Pancreas (tissue), 10 donors: ENCODE measurements at regions of chr9 and their contacts with region 1.

Region 1: DNA sequence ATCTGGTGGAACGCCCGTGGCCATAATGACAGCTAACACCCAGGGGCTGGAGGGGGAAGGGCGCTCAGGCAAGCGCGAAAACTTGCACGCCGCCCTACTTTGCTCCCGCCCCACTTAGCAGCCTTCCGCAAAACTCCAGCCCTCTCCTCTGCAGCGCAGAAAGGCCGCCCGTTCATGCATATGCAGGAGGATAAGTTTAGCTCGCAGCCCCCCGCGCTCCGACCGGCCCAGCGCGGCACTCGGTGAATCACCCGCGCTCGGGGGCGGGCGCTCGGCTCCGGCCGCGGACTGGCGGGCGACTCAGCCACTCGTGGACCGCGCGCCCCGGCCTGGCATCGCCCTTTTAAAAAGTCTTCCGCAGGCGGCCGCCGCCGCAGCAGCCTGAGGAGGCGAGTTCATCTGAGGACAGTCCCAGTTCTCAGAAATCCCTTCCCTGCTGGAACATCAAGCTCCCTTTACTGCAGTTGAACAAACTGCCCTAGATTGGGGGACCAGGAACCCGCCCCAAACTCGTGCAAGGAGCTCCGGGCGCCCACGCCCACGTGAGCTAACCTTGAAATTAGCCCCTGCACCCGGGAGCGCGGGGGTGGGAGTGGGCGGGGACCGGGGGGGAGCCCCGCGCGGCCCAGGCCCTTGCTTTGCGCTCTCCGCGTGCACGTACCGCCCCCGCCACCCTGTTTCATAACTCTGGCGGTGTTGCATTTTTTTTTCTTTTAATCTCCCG is 4.5 kb upstream of the KLF9 start:
- DNase-seq: peak; percentile 93 to 97 (median 96)
- ATAC-seq: peak; percentile 49 to 64 (median 56)
- H3K4me3 ChIP-seq: peak overlapping the region; percentile 7 to 50 (median 36)
- H3K27ac ChIP-seq: peak overlapping the region; percentile 97 to 100 (median 100)
- H3K4me1 ChIP-seq: peaks cover 17 to 32% (median 27%) of the 10 kb centered on the region in 3 donors
- H3K27me3 ChIP-seq: no peaks in the 10 kb centered on the region
- CTCF ChIP-seq: no peak

Region 2: DNA sequence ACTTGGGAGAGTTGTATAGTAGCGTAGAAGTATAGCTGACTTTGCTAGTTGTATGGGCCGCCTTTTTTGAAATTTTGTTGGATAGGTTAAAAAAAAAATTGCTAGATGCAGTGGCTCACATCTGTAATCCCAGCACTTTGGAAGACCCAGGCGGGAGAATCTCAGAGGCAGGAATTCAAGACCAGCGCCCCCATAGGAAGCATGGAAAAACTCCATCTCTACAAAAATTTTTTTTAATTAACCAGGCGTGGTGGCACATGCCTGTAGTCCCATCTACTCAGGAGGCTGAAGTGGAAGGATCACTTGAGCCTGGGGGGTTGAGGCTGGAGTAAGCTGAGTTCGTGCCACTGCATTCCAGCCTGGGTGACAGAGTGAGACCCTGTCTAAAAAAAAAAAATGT is 101.0 kb before region 1 on chr9:
- intact Hi-C with region 1: no loop called
- DNase-seq: no peak
- ATAC-seq: no peak
- H3K4me3 ChIP-seq: no peak overlapping the region
- H3K27ac ChIP-seq: no peak overlapping the region
- H3K4me1 ChIP-seq: no peaks in the 10 kb centered on the region
- H3K27me3 ChIP-seq: no peaks in the 10 kb centered on the region
- CTCF ChIP-seq: no peak

Region 3: GRCh38 chr9:70466976-70467561 is 48.1 kb after region 1 on chr9:
- intact Hi-C with region 1: loop called in 1 of 3 experiments (anchors 5 kb)
- DNase-seq: no peak
- ATAC-seq: peak in 1 of 4 donors; percentile 31
- H3K4me3 ChIP-seq: no peak overlapping the region
- H3K27ac ChIP-seq: no peak overlapping the region
- H3K4me1 ChIP-seq: peaks cover 18 to 23% (median 22%) of the 10 kb centered on the region in 3 donors
- H3K27me3 ChIP-seq: no peaks in the 10 kb centered on the region
- CTCF ChIP-seq: no peak

Region 4: DNA sequence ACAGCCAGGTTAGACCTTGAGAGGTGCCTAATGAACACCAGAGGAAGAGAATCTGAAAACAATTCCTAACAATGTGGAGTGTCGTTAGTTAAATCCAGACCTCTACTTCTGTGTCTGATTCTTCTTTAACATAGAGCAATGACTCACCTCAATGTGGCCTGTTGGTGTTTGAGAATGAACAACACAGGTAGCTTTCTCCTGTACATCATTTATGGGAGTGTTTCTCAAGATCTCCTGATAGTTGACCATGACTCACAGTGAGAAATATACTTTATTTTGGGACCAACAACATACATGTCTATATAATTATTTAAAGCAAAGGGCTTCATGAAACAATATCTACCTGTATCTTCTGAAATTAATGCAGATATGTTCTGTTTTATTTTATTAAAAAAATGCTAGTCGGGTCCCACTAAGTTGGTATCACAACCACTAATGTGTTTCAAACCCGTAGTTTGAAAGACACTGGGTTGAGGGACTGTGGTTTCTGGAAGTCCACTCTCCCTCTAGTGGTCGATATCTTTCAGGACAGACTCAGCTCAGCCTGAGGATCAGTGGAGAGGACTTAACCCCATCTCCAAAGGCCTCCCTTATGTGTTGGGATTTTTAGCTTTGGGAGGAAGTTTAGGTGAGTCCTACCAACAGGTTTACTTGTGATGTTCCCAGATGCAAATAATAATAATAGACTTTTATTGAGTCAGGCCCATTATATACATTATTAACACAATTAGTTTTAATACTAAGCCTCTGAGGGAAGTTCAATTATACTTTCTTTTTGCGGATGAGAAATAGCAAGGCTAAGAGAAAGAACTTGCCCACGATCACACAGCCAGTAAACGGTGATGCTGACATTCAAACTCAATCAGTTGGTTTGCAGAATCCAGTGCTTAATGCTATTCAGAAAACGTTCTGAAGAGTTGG is 65.5 kb after region 1 on chr9:
- intact Hi-C with region 1: loop called in 1 of 3 experiments (anchors 5 kb)
- DNase-seq: peak in 3 of 6 donors; percentile 38 to 50 (median 38)
- ATAC-seq: peak; percentile 36 to 80 (median 70)
- H3K4me3 ChIP-seq: no peak overlapping the region
- H3K27ac ChIP-seq: no peak overlapping the region
- H3K4me1 ChIP-seq: peaks cover 22 to 32% (median 29%) of the 10 kb centered on the region in 3 donors
- H3K27me3 ChIP-seq: no peaks in the 10 kb centered on the region
- CTCF ChIP-seq: peak; percentile 29 to 69 (median 63)

Region 5: DNA sequence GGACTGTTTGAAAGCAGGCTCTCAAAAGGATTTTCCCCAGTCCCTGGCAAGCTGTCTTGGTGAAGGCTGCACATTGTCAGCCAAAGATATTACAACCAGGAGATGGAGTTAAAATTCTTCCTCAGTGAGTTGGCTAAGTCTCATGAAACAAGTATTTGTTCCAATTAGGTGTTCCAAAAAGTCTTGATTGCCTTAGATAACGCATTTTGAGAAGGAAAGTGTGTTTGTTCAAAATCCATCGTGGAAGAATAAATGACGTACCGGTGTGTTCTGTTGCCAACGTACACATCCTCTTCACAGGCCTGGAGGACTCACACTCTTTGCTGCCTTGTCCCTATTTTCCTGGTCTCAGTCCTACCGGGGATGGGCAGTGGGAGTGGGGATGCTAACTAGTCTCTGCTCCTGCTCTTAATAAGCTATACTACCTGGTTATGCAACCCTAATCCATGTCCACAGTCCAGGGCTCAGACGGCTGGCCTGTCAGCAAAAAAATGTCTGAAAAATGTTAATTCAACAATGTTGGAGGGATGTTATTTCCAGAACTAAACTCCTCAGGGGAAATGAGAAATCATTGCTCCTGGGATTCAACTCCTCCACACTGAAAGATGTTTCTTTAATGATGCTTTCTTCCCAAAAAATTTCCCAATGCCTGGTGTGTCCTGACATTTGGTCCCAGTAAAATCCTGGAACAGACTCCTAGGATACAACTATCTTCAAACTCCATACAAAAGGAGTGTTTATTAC is 170.8 kb after region 1 on chr9:
- intact Hi-C with region 1: loop called in 1 of 3 experiments (anchors 10 kb)
- DNase-seq: no peak
- ATAC-seq: peak in 3 of 4 donors; percentile 48 to 67 (median 59)
- H3K4me3 ChIP-seq: no peak overlapping the region
- H3K27ac ChIP-seq: no peak overlapping the region
- H3K4me1 ChIP-seq: peaks cover 0 to 4% (median 0%) of the 10 kb centered on the region in 3 donors
- H3K27me3 ChIP-seq: no peaks in the 10 kb centered on the region
- CTCF ChIP-seq: no peak